OCI-LY7 (cell line): ENCODE measurements at regions of chr15 and their contacts with region 1.

Region 1: DNA sequence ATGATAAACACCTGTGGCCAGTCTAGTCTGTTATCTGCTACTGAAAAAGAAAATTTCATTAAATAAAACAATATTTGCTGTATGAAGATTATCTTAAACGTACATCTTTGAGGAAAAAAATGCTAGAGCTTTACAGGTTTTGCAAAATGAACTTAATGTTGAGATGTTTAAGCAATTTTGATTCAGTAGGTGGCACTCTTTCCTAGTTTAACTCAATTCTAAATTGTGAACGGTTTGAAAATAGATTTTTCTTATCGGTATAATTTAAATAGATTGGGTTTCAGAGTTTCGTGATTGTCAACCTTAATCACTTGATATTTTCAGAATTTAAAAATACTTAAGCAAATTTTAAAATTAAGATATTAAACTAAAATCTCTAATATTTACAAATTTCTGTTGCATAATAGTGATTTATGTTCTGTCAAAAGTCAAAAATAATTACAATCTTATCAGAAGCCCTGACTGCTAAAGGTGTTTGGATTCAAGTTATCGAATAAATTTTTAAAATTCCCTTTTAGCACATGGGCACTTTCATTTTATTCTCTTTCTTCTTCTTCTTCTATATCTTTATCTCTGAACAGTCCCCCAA is 7.0 kb upstream of the RNF111 start:
- DNase-seq: peak; percentile 65
- H3K4me3 ChIP-seq: peak overlapping the region; percentile 39
- H3K27ac ChIP-seq: peak overlapping the region; percentile 84
- H3K4me1 ChIP-seq: peaks cover 71% of the 10 kb centered on the region
- CTCF ChIP-seq: peak; percentile 89

Region 2: GRCh38 chr15:57561041-57561711 is 1419.3 kb before region 1 on chr15:
- CTCF ChIA-PET with region 1: no interaction called
- POLR2A ChIA-PET with region 1: no interaction called
- intact Hi-C with region 1: no loop called
- DNase-seq: peak; percentile 72
- H3K4me3 ChIP-seq: no peak overlapping the region
- H3K27ac ChIP-seq: no peak overlapping the region
- H3K4me1 ChIP-seq: peaks cover 11% of the 10 kb centered on the region
- CTCF ChIP-seq: peak; percentile 93

Region 3: GRCh38 chr15:58933281-58934113 is 46.9 kb before region 1 on chr15 and contains the start of gene SLTM:
- CTCF ChIA-PET with region 1: no interaction called
- POLR2A ChIA-PET with region 1: interaction called, 3 read pairs
- intact Hi-C with region 1: loop called (anchors 2 kb)
- DNase-seq: peak; percentile 95
- H3K4me3 ChIP-seq: peak within 1 kb of the TSS; percentile 77
- H3K27ac ChIP-seq: peak within 1 kb of the TSS; percentile 92
- H3K4me1 ChIP-seq: peaks cover 20% of the 10 kb centered on the region
- CTCF ChIP-seq: peak; percentile 58
- total RNA-seq, gene SLTM: 103 and 158 TPM in 2 replicates

Region 4: GRCh38 chr15:59104912-59105732 is 124.7 kb after region 1 on chr15 and contains the start of gene CCNB2:
- CTCF ChIA-PET with region 1: no interaction called
- POLR2A ChIA-PET with region 1: no interaction called
- intact Hi-C with region 1: loop called (anchors 2 kb)
- DNase-seq: peak; percentile 96
- H3K4me3 ChIP-seq: peak within 1 kb of the TSS; percentile 90
- H3K27ac ChIP-seq: peak within 1 kb of the TSS; percentile 83
- H3K4me1 ChIP-seq: peaks cover 20% of the 10 kb centered on the region
- CTCF ChIP-seq: no peak
- total RNA-seq, gene CCNB2: 87.9 and 93.9 TPM in 2 replicates

Region 5: DNA sequence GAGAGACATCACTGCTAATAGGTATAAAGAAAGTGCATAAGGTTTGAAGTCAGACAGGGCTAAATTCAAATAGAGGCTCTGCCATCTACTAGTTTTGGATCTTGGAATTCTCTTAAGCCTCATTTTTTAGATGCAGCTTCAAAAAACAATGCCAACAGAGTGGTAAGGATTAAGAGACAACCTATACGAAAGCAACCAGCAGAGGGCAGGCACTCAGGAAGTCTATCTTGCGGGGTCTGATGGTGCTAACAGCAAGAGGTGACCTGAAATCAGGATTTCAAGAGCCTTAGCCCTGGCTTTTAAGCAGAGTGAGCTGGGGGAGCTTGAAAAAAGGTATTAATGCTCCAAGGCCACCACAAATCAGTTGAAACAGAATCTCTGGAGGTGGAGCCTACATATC is 266.9 kb after region 1 on chr15:
- CTCF ChIA-PET with region 1: no interaction called
- POLR2A ChIA-PET with region 1: interaction called, 3 read pairs
- intact Hi-C with region 1: loop called (anchors 5 kb)
- DNase-seq: peak; percentile 88
- H3K4me3 ChIP-seq: no peak overlapping the region
- H3K27ac ChIP-seq: no peak overlapping the region
- H3K4me1 ChIP-seq: peaks cover 64% of the 10 kb centered on the region
- CTCF ChIP-seq: peak; percentile 93

Region 6: GRCh38 chr15:59410391-59410896 is 430.0 kb after region 1 on chr15:
- CTCF ChIA-PET with region 1: no interaction called
- POLR2A ChIA-PET with region 1: interaction called, 7 read pairs
- intact Hi-C with region 1: loop called (anchors 2 kb)
- DNase-seq: peak; percentile 55
- H3K4me3 ChIP-seq: no peak overlapping the region
- H3K27ac ChIP-seq: peak overlapping the region; percentile 81
- H3K4me1 ChIP-seq: peaks cover 94% of the 10 kb centered on the region
- CTCF ChIP-seq: no peak

Region 7: GRCh38 chr15:59688841-59689625 is 708.6 kb after region 1 on chr15 and contains the start of gene BNIP2:
- CTCF ChIA-PET with region 1: no interaction called
- POLR2A ChIA-PET with region 1: no interaction called
- intact Hi-C with region 1: loop called (anchors 2 kb)
- DNase-seq: peak; percentile 98
- H3K4me3 ChIP-seq: peak within 1 kb of the TSS; percentile 97
- H3K27ac ChIP-seq: peak within 1 kb of the TSS; percentile 95
- H3K4me1 ChIP-seq: peaks cover 51% of the 10 kb centered on the region
- CTCF ChIP-seq: no peak; the same call in 1 of the 2 replicates
- total RNA-seq, gene BNIP2: 65.3 and 107 TPM in 2 replicates